Activated CD8-positive, alpha-beta T cell treated with anti-CD3 and anti-CD28 coated beads for 36 hours (primary cell): ENCODE measurements at regions of chr7 and their contacts with region 1.

Region 1: DNA sequence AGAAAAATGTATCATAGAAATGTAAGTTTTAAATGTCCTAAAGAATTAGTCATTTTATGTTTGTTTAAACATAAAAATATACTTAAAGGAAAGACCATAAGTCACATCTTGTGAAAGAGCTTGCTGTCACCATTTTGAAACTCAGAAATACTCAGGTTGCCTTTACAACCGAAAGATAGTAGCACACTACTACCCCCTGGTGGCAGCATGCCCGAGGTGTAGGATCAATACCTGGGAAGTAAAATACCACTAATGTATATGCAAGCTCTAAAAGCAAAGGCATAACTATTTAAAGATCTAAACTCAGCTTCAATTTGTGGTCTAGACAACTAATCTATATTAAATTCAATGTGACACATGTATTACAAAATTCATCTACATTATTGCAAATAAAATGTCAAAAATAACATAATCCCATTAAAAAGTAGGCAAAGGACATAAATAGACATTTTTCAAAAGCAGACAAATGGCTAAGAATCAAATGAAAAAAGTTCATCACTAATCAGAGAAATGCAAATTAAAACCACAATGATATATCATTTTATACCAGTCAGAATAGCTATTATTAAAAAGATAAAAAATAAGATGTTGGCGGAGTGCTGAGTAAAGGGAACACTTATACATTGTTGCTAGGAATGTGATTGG is 47.7 kb upstream of the FGL2 start:
- DNase-seq: peak; percentile 97
- ATAC-seq: peak; percentile 97
- H3K4me3 Mint-ChIP-seq: no peak overlapping the region
- H3K27ac Mint-ChIP-seq: no peak overlapping the region
- H3K4me1 Mint-ChIP-seq: peaks cover 10% of the 10 kb centered on the region
- H3K27me3 Mint-ChIP-seq: no peaks in the 10 kb centered on the region
- CTCF ChIP-seq: peak; percentile 82

Region 2: DNA sequence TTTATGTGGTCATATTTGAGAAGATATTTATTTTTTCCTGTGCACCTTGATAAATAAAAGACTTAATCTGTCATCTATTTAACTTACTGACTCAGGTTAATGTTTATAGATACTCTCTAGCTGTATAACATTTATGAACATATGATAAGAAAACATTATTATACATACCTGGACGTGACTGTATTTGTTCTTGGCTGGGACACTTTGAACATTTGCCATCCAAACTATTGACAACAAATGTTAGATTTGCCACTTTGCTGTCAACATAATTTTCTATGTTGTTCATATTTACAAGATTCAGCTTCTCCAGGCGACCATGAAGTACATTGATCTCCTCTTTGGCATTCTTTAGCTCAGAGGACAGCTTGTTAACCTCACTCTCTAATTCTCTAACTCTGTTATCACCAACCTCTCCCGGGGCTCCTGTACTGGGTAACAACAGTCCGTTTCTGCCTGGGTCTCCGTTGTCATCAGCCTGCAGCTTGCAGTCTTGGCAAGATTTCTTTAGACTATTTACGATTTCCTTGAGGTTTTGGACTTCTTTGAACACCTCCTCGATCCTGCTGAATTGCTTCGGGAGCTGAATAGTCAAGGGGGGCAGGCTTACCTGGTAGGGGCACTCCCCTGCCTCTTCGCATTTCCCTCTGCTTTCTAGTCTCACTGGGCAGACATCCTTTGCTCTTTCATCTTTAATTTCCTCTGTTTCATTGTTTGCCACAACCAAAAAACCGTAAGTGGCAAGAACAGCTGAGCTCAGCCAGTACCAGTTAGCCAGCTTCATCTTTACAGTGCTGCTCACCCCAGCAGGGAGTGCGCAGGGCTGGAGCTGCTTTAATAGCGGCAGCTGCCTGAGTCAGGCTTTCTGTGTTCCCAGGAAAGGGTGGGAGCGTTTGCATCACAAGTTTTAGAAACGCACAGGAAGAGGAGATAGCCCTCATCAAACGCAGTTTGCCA is 48.0 kb before region 1 on chr7 and contains the start of gene FGL2:
- CTCF ChIA-PET with region 1: interaction called, 22 read pairs
- POLR2A ChIA-PET with region 1: no interaction called
- intact Hi-C with region 1: no loop called
- DNase-seq: peak; percentile 46
- ATAC-seq: peak; percentile 78
- H3K4me3 Mint-ChIP-seq: peak within 1 kb of the TSS; percentile 73
- H3K27ac Mint-ChIP-seq: peak within 1 kb of the TSS; percentile 39
- H3K4me1 Mint-ChIP-seq: peaks cover 20% of the 10 kb centered on the region
- H3K27me3 Mint-ChIP-seq: no peaks in the 10 kb centered on the region
- CTCF ChIP-seq: no peak
- total RNA-seq, gene FGL2: 0.63 to 0.95 TPM

Region 3: GRCh38 chr7:77258014-77258413 is 10.7 kb after region 1 on chr7:
- CTCF ChIA-PET with region 1: interaction called, 12 read pairs
- POLR2A ChIA-PET with region 1: interaction called, 3 read pairs
- intact Hi-C with region 1: no loop called
- DNase-seq: peak; percentile 8
- ATAC-seq: no peak
- H3K4me3 Mint-ChIP-seq: no peak overlapping the region
- H3K27ac Mint-ChIP-seq: no peak overlapping the region
- H3K4me1 Mint-ChIP-seq: no peaks in the 10 kb centered on the region
- H3K27me3 Mint-ChIP-seq: no peaks in the 10 kb centered on the region
- CTCF ChIP-seq: no peak

Region 4: DNA sequence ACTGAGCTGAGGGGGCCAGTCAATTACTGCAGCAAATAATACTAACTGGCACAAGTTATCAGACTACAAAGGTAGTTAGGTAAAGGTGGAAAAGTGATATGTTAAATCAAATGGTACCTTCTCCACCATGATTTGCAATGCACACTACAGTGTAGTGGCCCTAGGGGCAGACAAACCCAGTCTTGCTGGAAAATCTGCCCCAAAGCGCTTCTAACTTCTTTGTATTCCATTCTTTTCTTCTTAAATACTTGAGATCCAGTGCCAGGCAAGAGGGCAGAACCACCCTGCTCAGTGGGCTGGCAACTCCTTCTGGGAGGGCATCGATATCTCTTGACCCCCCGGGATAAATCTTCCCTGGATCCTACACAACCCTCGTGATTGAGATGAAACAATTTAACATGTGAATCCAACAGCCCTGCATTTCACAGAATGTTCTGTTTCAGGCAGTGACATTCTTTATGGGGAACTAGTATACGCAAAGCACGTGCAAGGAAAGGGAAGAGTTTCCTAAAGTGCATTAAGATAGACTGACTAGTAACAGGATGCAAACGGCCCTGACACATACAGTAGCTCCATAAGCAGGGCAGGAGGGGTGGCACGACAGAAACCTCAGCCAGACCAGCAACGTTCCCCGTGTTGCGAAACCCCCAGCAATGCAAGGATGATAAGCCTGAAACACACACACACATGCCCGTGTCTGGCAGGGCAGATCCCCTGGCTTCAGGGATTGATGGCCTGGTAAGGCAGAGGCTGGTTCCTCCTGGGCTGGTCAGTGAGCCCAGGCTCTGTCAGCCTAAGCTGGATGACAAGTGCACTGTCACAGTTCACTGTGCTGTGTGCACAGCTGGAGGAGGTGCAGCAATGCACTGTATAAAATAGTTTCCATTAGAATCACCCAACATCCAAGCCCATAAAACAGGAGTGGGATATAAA is 79.6 kb after region 1 on chr7:
- CTCF ChIA-PET with region 1: interaction called, 36 read pairs
- POLR2A ChIA-PET with region 1: no interaction called
- intact Hi-C with region 1: loop called (anchors 5 kb)
- DNase-seq: no peak
- ATAC-seq: no peak
- H3K4me3 Mint-ChIP-seq: no peak overlapping the region
- H3K27ac Mint-ChIP-seq: no peak overlapping the region
- H3K4me1 Mint-ChIP-seq: peaks cover 53% of the 10 kb centered on the region
- H3K27me3 Mint-ChIP-seq: no peaks in the 10 kb centered on the region
- CTCF ChIP-seq: no peak

Region 5: GRCh38 chr7:77331938-77332695 is 84.8 kb after region 1 on chr7:
- CTCF ChIA-PET with region 1: interaction called, 36 read pairs
- POLR2A ChIA-PET with region 1: no interaction called
- intact Hi-C with region 1: loop called (anchors 5 kb)
- DNase-seq: peak; percentile 85
- ATAC-seq: peak; percentile 58
- H3K4me3 Mint-ChIP-seq: no peak overlapping the region
- H3K27ac Mint-ChIP-seq: no peak overlapping the region
- H3K4me1 Mint-ChIP-seq: peaks cover 45% of the 10 kb centered on the region
- H3K27me3 Mint-ChIP-seq: no peaks in the 10 kb centered on the region
- CTCF ChIP-seq: peak; percentile 61

Region 6: GRCh38 chr7:77409005-77409738 is 161.8 kb after region 1 on chr7:
- CTCF ChIA-PET with region 1: no interaction called
- POLR2A ChIA-PET with region 1: no interaction called
- intact Hi-C with region 1: no loop called
- DNase-seq: no peak
- ATAC-seq: no peak
- H3K4me3 Mint-ChIP-seq: no peak overlapping the region
- H3K27ac Mint-ChIP-seq: no peak overlapping the region
- H3K4me1 Mint-ChIP-seq: peaks cover 9% of the 10 kb centered on the region
- H3K27me3 Mint-ChIP-seq: no peaks in the 10 kb centered on the region
- CTCF ChIP-seq: no peak